A549 (cell line): ENCODE measurements at regions of chr7 and their contacts with region 1.

Region 1: DNA sequence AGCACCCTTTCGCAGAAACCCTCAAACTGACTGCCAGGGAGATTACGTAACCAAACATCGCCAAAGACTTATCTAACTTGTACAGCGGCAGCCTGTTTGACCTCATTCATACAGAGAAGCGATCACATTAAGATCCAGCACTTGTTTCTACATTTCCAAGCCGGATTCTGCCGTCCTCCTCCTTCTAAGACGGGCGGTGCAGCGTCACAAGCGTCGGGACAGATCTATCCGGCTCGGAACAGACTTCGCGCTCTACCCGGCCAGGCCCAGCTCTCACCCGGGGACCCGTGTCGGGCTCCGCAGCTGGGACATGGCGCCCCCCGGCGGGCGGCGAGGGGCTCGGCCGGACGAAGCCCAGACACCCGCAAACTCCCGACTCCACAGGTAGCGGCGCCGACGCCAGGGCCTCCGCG is 373 bp downstream of the H2AZ2 start:
- DNase-seq: peak; percentile 83 to 94
- ATAC-seq: peak; percentile 80 to 89
- H3K4me3 ChIP-seq: peak overlapping the region; percentile 61
- H3K27ac ChIP-seq: peak overlapping the region; percentile 87 to 97
- H3K4me1 ChIP-seq: peaks cover 15% of the 10 kb centered on the region
- CTCF ChIP-seq: peak; percentile 91
- EP300 ChIP-seq: no peak
- POLR2A ChIP-seq: no peak
- RAD21 ChIP-seq: peak; percentile 64 to 89; a peak in 4 of 5 replicates

Region 2: DNA sequence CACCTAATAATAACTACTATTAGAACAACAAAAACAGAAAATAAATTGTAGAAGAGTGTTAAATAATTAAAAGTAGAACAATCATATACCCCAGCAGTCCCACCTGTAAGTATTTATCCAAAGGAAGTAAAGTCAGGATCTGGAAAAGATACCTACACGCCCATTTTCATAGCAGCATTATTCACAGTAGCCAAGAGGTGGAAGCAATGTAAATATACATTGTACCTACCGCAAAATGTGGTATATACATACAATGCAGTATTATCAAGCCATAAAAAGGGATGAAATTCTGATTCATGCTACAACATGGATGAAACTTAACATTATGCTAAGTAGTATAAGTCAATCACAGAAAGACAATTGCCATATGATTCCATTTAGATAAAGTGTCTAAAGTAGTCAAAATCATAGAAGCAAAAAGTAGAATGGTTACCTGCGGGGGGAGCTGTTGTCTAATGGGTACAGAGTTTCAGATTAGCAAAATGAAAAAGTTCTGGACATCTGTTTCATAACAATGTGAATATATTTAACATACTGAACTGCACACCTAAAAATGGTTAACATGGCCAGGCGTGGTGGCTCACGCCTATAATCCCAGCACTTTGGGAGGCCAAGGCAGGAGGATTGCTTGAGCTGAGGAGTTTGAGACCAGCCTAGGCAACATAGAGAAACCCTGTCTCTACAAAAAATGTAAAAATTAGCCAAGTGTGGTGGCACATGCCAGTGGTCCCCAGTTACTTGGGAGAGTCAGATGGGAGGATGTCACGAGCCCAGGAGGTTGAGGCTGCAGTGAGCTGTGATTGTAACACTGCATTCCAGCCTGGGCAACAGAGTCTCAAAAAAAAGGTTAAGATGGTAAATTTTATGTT is 259.4 kb before region 1 on chr7:
- CTCF ChIA-PET with region 1: interaction called, 29 read pairs
- POLR2A ChIA-PET with region 1: interaction called, 14 read pairs
- DNase-seq: peak in 1 of 2 experiments; percentile 61
- ATAC-seq: peak; percentile 84 to 85
- H3K4me3 ChIP-seq: no peak overlapping the region
- H3K27ac ChIP-seq: peak overlapping the region in 1 of 2 experiments; percentile 50; a peak in 1 of 6 replicates
- H3K4me1 ChIP-seq: 0 out of 3 replicates have a peak, but pooled peaks cover 1% of the 10 kb centered on the region
- CTCF ChIP-seq: peak; percentile 90
- EP300 ChIP-seq: no peak
- POLR2A ChIP-seq: no peak
- RAD21 ChIP-seq: peak; percentile 92 to 94

Region 3: GRCh38 chr7:44801890-44802289 is 45.6 kb before region 1 on chr7:
- CTCF ChIA-PET with region 1: interaction called, 16 read pairs
- POLR2A ChIA-PET with region 1: interaction called, 6 read pairs
- DNase-seq: no peak
- ATAC-seq: no peak
- H3K4me3 ChIP-seq: no peak overlapping the region
- H3K27ac ChIP-seq: no peak overlapping the region
- H3K4me1 ChIP-seq: peaks cover 21% of the 10 kb centered on the region
- CTCF ChIP-seq: no peak
- EP300 ChIP-seq: no peak
- POLR2A ChIP-seq: no peak
- RAD21 ChIP-seq: no peak

Region 4: GRCh38 chr7:44858161-44858560 is 10.6 kb after region 1 on chr7:
- CTCF ChIA-PET with region 1: interaction called, 17 read pairs
- POLR2A ChIA-PET with region 1: interaction called, 9 read pairs
- DNase-seq: no peak
- ATAC-seq: no peak
- H3K4me3 ChIP-seq: no peak overlapping the region
- H3K27ac ChIP-seq: no peak overlapping the region
- H3K4me1 ChIP-seq: peaks cover 11% of the 10 kb centered on the region; the same call in 1 of the 3 replicates
- CTCF ChIP-seq: no peak
- EP300 ChIP-seq: no peak
- POLR2A ChIP-seq: no peak
- RAD21 ChIP-seq: no peak

Region 5: GRCh38 chr7:45111298-45112223 is 264.0 kb after region 1 on chr7 and contains the start of gene TBRG4:
- CTCF ChIA-PET with region 1: interaction called, 5 read pairs
- POLR2A ChIA-PET with region 1: interaction called, 11 read pairs
- DNase-seq: peak; percentile 85 to 97
- ATAC-seq: peak; percentile 94 to 96
- H3K4me3 ChIP-seq: peak within 1 kb of the TSS; percentile 86
- H3K27ac ChIP-seq: peak within 1 kb of the TSS; percentile 92 to 96
- H3K4me1 ChIP-seq: peaks cover 28% of the 10 kb centered on the region
- CTCF ChIP-seq: peak; percentile 61
- EP300 ChIP-seq: no peak
- POLR2A ChIP-seq: peak; percentile 94
- RAD21 ChIP-seq: peak in 1 of 2 experiments; percentile 23; a peak in 3 of 5 replicates
- polyA plus RNA-seq, gene TBRG4: 100 and 135 TPM in 2 replicates